ENCODE measurements at regions of chr20 and their contacts with region 1.

Region 1: DNA sequence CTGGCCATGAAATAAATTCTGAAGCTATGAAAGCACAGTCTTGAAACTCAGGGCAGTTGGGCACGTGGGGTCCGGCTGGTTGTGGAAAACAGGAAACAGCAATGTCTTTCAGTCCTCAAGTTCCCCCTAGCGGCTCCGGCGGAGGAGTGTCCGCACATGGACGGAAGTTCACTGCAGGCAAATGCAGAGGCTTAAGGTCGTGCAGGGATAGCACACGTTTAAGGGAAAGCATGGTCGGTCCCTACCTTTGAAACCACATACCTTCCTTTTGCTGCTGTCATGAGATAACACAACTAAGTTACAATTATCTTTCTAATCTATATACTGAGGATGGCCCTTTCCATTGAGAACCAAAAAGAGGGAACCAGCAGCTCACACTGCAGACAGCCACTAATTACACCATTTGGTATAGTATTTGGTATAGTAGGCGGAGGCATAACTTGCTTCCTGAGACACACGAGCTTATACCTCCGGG is 52.6 kb upstream of the NFATC2 start:
- DNase-seq: peak; percentile 79 to 87
- ATAC-seq: peak; percentile 96

Region 2: DNA sequence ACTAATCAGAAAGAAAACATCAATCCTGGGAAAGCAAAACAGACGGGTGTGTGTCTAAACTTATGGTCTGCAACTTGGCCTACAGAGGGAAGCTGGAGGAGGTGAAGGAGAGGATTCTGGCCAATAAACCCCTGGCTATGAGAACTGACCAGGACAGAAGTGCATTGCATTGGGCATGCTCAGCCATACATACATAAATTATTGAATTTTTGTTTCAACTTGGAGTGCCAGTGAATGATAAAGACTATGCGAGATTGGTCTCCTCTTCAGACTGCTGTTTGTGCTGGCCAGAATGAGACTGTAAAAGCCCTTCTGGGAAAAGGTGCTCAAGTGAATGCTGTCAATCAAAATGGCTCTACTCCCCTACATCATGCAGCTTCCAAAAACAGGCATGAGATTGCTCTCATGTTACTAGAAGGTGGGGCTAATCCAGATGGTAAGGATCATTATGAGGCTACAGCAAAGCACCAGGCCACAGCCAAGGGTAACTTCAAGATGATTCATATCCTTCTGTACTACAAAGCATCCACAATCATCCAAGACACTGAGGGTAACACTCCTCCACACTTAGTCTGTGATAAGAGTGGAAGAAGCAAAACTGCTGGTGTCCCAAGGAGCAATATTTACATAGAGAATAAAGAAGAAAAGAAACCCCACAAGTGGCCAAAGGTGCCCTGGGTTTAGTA is 681.3 kb before region 1 on chr20:
- intact Hi-C with region 1: no loop called
- DNase-seq: no peak
- ATAC-seq: no peak

Region 3: GRCh38 chr20:51372176-51372803 is 222.8 kb before region 1 on chr20:
- intact Hi-C with region 1: loop called (anchors 5 to 10 kb)
- DNase-seq: peak; percentile 36 to 69
- ATAC-seq: peak; percentile 97

Region 4: GRCh38 chr20:51378171-51378929 is 216.7 kb before region 1 on chr20:
- intact Hi-C with region 1: loop called (anchors 5 to 10 kb)
- DNase-seq: no peak
- ATAC-seq: no peak

Measured in left colon (tissue), 2 donors.